ENCODE measurements at regions of chr1 and their contacts with region 1.

Region 1: GRCh38 chr1:3727042-3727824 is 25.0 kb upstream of the CCDC27 start:
- DNase-seq: peak in 3 of 10 donors; percentile 55 to 70 (median 56)
- H3K4me3 ChIP-seq: no peak overlapping the region
- H3K27ac ChIP-seq: no peak overlapping the region
- H3K27me3 ChIP-seq: peaks cover 0 to 18% (median 0%) of the 10 kb centered on the region in 45 donors
- CTCF ChIP-seq: peak in 49 of 56 donors; percentile 35 to 72 (median 51)

Region 2: GRCh38 chr1:3491291-3492246 is 235.7 kb before region 1 on chr1:
- intact Hi-C with region 1: loop called (anchors 5 kb)
- DNase-seq: peak; percentile 60 to 89 (median 73)
- H3K4me3 ChIP-seq: peak overlapping the region in 31 of 59 donors; percentile 8 to 51 (median 31)
- H3K27ac ChIP-seq: no peak overlapping the region
- H3K27me3 ChIP-seq: no peaks in the 10 kb centered on the region
- CTCF ChIP-seq: peak; percentile 96 to 100 (median 100)

Region 3: DNA sequence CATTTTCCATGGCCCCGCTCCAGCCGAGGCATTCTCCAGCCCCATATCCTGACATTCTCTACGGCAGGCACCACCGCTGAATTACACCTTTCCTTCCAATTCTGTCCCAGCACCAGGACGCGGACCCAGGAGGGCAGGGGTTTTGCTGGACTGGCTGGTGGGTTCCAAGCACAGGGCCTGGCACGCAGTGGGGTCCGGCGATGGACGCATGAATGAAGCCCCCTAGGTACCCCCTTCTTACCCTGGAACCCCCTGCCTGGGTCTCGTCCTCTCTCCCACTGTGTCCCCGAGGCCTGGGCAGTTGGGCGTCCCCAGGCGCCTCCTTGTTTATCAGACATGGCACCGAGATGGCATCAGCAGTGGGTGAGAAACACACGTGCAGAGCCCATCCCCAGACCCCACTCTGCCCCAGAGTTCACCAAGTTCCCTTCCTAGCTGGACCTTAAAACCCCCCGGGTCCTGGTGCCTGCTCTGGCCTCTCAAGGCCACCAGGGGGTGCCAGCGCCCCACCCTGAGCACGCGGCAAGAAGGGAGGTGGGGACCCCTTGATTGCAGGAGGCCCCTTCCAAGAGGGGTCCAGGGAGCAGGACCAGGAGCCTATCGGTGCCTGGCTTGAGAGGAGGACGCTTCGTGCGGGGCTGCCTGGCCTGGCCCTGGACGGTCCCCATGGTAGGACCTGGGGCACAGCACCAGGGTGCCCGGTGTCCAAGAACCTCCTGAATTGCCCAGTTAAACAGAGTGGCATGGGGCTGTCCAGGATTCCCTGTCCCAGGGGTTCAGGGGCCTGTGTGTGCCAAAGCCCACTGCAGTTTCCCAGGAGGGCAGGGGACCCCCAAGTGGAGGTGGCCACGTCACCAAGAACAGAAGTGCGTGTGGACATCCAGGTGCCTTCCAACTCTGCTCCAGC is 162.1 kb before region 1 on chr1:
- intact Hi-C with region 1: loop called in 1 of 2 experiments (anchors 10 kb)
- DNase-seq: no peak
- H3K4me3 ChIP-seq: no peak overlapping the region
- H3K27ac ChIP-seq: no peak overlapping the region
- H3K27me3 ChIP-seq: peaks cover 0 to 3% (median 0%) of the 10 kb centered on the region in 45 donors
- CTCF ChIP-seq: peak; percentile 41 to 90 (median 79)

Region 4: DNA sequence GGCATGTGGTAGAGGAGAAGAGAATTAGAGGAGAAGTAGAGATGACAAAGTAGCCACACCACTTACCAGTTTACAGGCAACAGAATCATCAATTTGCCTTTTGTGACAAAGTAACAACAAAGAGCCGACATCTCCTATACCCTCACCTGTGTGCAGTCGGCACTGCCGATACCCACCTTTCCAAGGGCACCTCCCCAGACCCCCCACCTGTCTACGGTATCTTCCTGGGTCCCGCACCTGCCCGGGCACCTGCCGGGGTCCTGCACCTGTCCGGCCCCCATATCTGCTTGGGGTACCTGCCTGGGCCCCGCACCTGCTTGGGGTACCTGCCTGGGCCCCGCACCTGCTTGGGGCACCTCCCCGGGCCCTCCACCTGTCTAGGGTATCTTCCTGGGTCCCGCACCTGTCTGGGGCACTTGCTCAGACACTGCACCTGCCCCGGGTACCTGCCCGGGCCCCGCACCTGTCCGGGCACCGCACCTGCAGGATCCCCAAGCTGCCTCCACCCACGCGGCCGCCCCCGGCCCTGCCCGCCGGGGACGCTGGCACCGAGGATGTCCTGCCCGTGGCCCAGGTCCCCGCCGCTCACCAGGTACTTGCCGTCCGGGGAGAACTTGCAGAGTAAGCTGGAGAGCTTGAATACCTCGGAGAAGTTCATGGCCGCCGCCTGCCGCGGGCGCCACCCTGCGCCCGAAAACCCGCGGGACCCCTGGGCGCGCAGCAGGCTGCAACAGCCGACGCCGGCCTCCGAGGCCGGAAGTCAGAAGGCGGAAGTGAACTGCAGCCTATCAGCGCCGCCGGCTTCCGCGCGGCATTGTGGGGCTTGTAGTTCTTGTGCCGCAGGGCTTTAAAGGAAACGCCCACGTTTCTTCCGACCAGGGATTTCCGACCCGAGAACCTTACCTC is 77.6 kb before region 1 on chr1 and contains the start of gene WRAP73:
- intact Hi-C with region 1: loop called in 1 of 2 experiments (anchors 10 kb)
- DNase-seq: peak; percentile 79 to 92 (median 88)
- H3K4me3 ChIP-seq: peak within 1 kb of the TSS; percentile 66 to 99 (median 94)
- H3K27ac ChIP-seq: peak within 1 kb of the TSS in 12 of 59 donors; percentile 27 to 85 (median 53)
- H3K27me3 ChIP-seq: peaks cover 4 to 46% (median 38%) of the 10 kb centered on the region in 45 donors
- CTCF ChIP-seq: peak in 41 of 56 donors; percentile 2 to 58 (median 32)
- total RNA-seq, gene WRAP73: 13.3 to 33.0 (median 22.0) TPM

Region 5: DNA sequence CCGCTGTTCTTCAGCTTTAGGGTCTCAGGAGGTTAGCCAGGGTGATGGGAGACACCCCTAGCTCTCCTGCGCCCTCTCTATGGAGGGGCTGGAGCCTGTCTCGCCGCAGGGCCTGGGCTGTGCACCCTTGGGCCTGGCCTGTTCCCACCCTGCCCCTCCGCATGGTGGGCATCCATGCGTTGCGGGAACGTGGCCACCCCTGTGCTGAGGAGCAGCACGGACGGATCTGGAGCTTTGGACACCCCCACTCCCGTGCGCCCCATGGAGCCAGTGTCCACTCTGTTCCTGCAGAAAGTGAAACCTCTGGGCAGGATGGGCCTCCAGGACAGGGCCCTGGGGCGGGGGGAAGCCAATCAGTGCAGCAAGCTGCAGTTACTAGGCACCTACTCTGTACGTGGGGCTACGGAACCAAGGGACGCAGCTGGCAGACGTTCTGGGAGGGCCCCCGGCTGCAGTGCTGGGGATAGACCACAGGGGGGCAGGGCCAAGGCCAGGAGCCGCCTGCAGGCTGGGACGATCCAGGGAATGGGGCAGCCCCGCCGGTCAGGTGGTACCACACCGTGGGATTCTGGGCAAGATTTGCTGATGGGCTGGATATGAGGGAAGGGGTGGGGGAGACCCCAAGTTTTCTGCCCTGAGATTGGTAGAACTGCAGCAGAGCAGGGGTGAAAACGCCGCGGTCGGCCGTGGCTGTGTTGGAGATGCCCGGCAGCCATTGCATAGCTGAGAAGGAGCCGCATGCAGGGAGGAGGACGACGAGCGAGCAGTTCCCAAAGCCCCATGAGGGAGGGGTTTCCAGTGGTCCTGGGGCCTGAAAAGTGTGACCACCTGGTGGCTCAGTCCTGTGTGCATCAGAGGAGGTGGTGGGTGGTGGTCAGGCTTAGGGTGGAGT is 31.7 kb before region 1 on chr1:
- intact Hi-C with region 1: loop called (anchors 1 to 2 kb)
- DNase-seq: peak; percentile 40 to 81 (median 64)
- H3K4me3 ChIP-seq: peak overlapping the region in 15 of 59 donors; percentile 0 to 47 (median 23)
- H3K27ac ChIP-seq: no peak overlapping the region
- H3K27me3 ChIP-seq: peaks cover 0 to 10% (median 0%) of the 10 kb centered on the region in 45 donors
- CTCF ChIP-seq: peak; percentile 42 to 96 (median 86)

Region 6: GRCh38 chr1:3869751-3870301 is 142.6 kb after region 1 on chr1:
- intact Hi-C with region 1: no loop called
- DNase-seq: no peak
- H3K4me3 ChIP-seq: no peak overlapping the region
- H3K27ac ChIP-seq: peak overlapping the region in 1 of 59 donors; percentile 40
- H3K27me3 ChIP-seq: no peaks in the 10 kb centered on the region
- CTCF ChIP-seq: no peak